Heart left ventricle (tissue), 16 donors: ENCODE measurements at regions of chr18 and their contacts with region 1.

Region 1: GRCh38 chr18:45967007-45967706 is at the start of gene EPG5:
- DNase-seq: peak; percentile 95 to 97 (median 96)
- ATAC-seq: peak; percentile 99 to 100 (median 100)
- H3K4me3 ChIP-seq: peak within 1 kb of the TSS; percentile 52 to 96 (median 80)
- H3K27ac ChIP-seq: peak within 1 kb of the TSS in 11 of 12 donors; percentile 32 to 80 (median 66)
- H3K4me1 ChIP-seq: peaks cover 0 to 40% (median 16%) of the 10 kb centered on the region in 12 donors
- H3K27me3 ChIP-seq: no peaks in the 10 kb centered on the region
- CTCF ChIP-seq: no peak
- POLR2A ChIP-seq: peak in 1 of 2 donors; percentile 61
- total RNA-seq, gene EPG5: 14.4 to 37.8 (median 23.8) TPM

Region 2: DNA sequence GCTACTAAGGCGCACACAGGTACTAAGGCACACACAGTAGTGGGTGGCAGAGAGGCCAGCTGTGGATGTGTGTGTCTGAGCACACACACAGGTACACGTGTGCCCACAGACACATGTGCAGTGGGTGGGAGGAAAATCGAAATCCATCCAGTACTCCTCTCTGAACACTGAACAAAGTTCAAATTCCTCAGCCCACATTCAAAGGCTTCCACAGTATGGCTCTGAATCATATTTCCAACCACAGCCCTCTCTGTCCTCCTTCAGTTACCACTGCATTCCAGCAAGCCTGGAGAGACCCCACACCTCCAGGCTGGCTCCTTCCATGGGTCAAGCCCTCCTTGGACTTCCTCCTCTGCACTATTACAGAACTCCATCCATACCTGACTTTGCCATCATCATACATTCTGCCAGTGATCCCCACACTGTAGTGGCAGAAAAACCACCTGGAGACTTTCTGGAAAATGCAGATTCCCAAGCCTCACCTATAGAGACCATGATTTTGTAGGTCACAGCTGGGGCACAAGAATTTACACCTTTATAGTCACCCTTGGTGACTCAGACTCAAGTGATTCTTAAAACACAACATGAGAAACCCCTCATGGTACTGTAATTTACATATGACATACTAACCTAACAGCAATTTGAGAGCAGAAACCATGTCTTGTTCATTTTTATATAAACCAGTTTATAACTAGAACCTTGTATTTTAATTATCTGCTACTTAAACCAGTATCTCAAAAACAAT is 31.4 kb before region 1 on chr18:
- intact Hi-C with region 1: loop called in 1 of 10 experiments (anchors 5 kb)
- DNase-seq: no peak
- ATAC-seq: no peak
- H3K4me3 ChIP-seq: no peak overlapping the region
- H3K27ac ChIP-seq: no peak overlapping the region
- H3K4me1 ChIP-seq: peaks cover 0 to 14% (median 0%) of the 10 kb centered on the region in 12 donors
- H3K27me3 ChIP-seq: no peaks in the 10 kb centered on the region
- CTCF ChIP-seq: no peak
- POLR2A ChIP-seq: no peak

Region 3: GRCh38 chr18:46097801-46098615 is 130.9 kb after region 1 on chr18 and contains the start of gene ATP5F1A:
- intact Hi-C with region 1: loop called in 1 of 10 experiments (anchors 10 kb)
- DNase-seq: peak; percentile 89 to 95 (median 94)
- ATAC-seq: peak; percentile 72 to 95 (median 83)
- H3K4me3 ChIP-seq: peak within 1 kb of the TSS; percentile 69 to 98 (median 84)
- H3K27ac ChIP-seq: peak within 1 kb of the TSS; percentile 86 to 99 (median 96)
- H3K4me1 ChIP-seq: peaks cover 0 to 46% (median 31%) of the 10 kb centered on the region in 12 donors
- H3K27me3 ChIP-seq: no peaks in the 10 kb centered on the region
- CTCF ChIP-seq: peak in 1 of 12 donors; percentile 20
- POLR2A ChIP-seq: peak; percentile 71 to 83
- total RNA-seq, gene ATP5F1A: 1,078 to 3,149 (median 1,758) TPM